ENCODE measurements at regions of chr12 and their contacts with region 1.

Region 1: GRCh38 chr12:10012630-10013330 is 2.4 kb downstream of the CLEC12B start:
- DNase-seq: no peak
- H3K4me3 ChIP-seq: peak overlapping the region in 51 of 59 donors; percentile 0 to 60 (median 31)
- H3K27ac ChIP-seq: peak overlapping the region in 57 of 59 donors; percentile 3 to 86 (median 68)
- H3K27me3 ChIP-seq: peaks cover 0 to under 1% (median 0%) of the 10 kb centered on the region in 45 donors
- CTCF ChIP-seq: peak in 1 of 56 donors; percentile 22

Region 2: DNA sequence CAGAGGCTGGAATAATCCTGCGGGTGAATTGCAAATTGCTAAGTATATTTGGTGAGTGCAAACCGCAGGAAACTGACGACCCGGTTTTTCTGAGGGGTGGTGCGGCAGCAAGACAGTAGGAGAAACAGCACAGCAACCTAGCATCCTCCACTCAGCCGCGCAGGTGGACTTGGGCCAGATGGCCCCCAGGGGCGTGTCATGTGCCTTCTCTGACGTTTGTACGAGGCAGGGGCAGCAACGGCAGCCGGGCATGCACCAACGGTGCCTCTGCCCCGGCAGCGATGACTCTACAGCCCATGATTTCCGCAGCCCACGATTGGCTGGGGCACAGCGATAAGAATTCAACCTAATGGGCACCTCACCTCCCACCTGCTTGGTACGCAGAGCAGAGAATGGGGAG is 69.5 kb before region 1 on chr12:
- intact Hi-C with region 1: loop called in 1 of 2 experiments (anchors 2 kb)
- DNase-seq: peak in 2 of 10 donors; percentile 71 to 78
- H3K4me3 ChIP-seq: peak overlapping the region in 35 of 59 donors; percentile 1 to 74 (median 30)
- H3K27ac ChIP-seq: peak overlapping the region in 4 of 59 donors; percentile 18 to 88 (median 50)
- H3K27me3 ChIP-seq: peaks cover 0 to 17% (median 0%) of the 10 kb centered on the region in 45 donors
- CTCF ChIP-seq: no peak